ENCODE measurements at regions of chr6 and their contacts with region 1.

Region 1: GRCh38 chr6:31958741-31959739 is at the starts of genes NELFE and SKIC2:
- DNase-seq: peak; percentile 98 to 99
- ATAC-seq: peak; percentile 97 to 98 (median 97)
- H3K4me3 ChIP-seq: peak within 1 kb of the TSS; percentile 70
- H3K4me3 Mint-ChIP-seq: peak within 1 kb of the TSS; percentile 96
- H3K27ac ChIP-seq: peak within 1 kb of the TSS; percentile 88
- H3K27ac Mint-ChIP-seq: peak within 1 kb of the TSS; percentile 97 to 98
- H3K4me1 ChIP-seq: peaks cover 22% of the 10 kb centered on the region
- H3K4me1 Mint-ChIP-seq: peaks cover 31 to 43% of the 10 kb centered on the region in 2 donors
- H3K27me3 ChIP-seq: no peaks in the 10 kb centered on the region
- H3K27me3 Mint-ChIP-seq: no peaks in the 10 kb centered on the region
- CTCF ChIP-seq: no peak
- total RNA-seq, gene NELFE: 52.6 to 62.3 (median 56.3) TPM
- total RNA-seq, gene SKIC2: 119 to 184 (median 151) TPM

Region 2: DNA sequence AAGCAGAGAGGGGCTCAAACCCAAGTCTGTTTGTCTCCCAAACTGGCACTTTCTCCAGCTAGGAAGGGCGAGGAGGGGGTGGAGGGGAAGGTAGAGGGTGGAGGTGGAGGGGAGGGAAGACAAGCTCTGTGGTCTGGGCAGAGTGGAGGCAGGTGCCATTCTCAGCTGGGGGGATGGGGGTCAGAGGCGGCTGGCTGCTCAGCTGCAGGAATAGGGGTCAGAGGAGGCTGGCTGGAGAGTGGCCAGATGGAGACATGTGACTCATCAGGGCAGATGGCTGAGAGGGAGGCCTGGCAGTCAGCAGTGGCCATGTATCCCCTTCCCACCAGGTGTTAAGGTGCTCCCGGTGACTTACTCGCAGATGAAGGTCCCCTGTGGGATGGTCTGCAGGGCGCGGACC is 76.7 kb before region 1 on chr6:
- intact Hi-C with region 1: no loop called
- DNase-seq: no peak
- ATAC-seq: no peak
- H3K4me3 ChIP-seq: no peak overlapping the region
- H3K4me3 Mint-ChIP-seq: no peak overlapping the region
- H3K27ac ChIP-seq: no peak overlapping the region
- H3K27ac Mint-ChIP-seq: no peak overlapping the region
- H3K4me1 ChIP-seq: no peaks in the 10 kb centered on the region
- H3K4me1 Mint-ChIP-seq: peaks cover 0 to 10% of the 10 kb centered on the region in 2 donors
- H3K27me3 ChIP-seq: no peaks in the 10 kb centered on the region
- H3K27me3 Mint-ChIP-seq: no peaks in the 10 kb centered on the region
- CTCF ChIP-seq: no peak

Region 3: GRCh38 chr6:31897612-31898382 is 61.2 kb before region 1 on chr6 and contains the start of gene EHMT2:
- intact Hi-C with region 1: loop called (anchors 5 kb)
- DNase-seq: peak; percentile 82 to 91
- ATAC-seq: peak; percentile 59 to 83 (median 74)
- H3K4me3 ChIP-seq: peak within 1 kb of the TSS; percentile 76
- H3K4me3 Mint-ChIP-seq: peak within 1 kb of the TSS; percentile 97
- H3K27ac ChIP-seq: peak within 1 kb of the TSS; percentile 81
- H3K27ac Mint-ChIP-seq: peak within 1 kb of the TSS; percentile 95
- H3K4me1 ChIP-seq: peaks cover 52% of the 10 kb centered on the region
- H3K4me1 Mint-ChIP-seq: peaks cover 28 to 52% of the 10 kb centered on the region in 2 donors
- H3K27me3 ChIP-seq: no peaks in the 10 kb centered on the region
- H3K27me3 Mint-ChIP-seq: no peaks in the 10 kb centered on the region
- CTCF ChIP-seq: no peak
- total RNA-seq, gene EHMT2: 49.3 to 56.6 (median 55.8) TPM

Region 4: DNA sequence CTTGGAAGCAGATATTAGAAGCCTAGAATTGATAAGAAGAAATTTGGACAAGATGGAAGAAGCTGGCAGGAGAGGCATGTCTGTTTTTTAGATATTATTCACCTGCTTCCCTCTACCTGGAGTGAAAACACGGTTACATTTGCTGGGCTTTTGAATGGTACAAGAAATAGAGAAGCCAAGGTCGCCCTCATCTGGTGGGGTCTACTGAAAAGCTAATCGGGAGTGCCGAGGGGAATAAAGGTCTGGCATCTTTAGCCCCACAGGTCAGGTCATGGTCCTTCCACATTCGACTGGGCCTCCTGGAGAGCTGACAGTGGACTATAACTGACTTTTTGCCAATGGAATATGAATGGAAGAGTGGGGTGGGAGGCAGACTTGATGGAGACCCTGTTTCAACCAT is 36.1 kb before region 1 on chr6:
- intact Hi-C with region 1: no loop called
- DNase-seq: peak in 1 of 2 donors; percentile 52
- ATAC-seq: no peak
- H3K4me3 ChIP-seq: no peak overlapping the region
- H3K4me3 Mint-ChIP-seq: no peak overlapping the region
- H3K27ac ChIP-seq: no peak overlapping the region
- H3K27ac Mint-ChIP-seq: no peak overlapping the region
- H3K4me1 ChIP-seq: no peaks in the 10 kb centered on the region
- H3K4me1 Mint-ChIP-seq: no peaks in the 10 kb centered on the region
- H3K27me3 ChIP-seq: no peaks in the 10 kb centered on the region
- H3K27me3 Mint-ChIP-seq: peaks cover 3 to 7% of the 10 kb centered on the region in 2 donors
- CTCF ChIP-seq: no peak

Region 5: GRCh38 chr6:31933537-31933936 is 25.5 kb before region 1 on chr6:
- intact Hi-C with region 1: no loop called
- DNase-seq: no peak
- ATAC-seq: no peak
- H3K4me3 ChIP-seq: no peak overlapping the region
- H3K4me3 Mint-ChIP-seq: no peak overlapping the region
- H3K27ac ChIP-seq: no peak overlapping the region
- H3K27ac Mint-ChIP-seq: no peak overlapping the region
- H3K4me1 ChIP-seq: no peaks in the 10 kb centered on the region
- H3K4me1 Mint-ChIP-seq: no peaks in the 10 kb centered on the region
- H3K27me3 ChIP-seq: no peaks in the 10 kb centered on the region
- H3K27me3 Mint-ChIP-seq: no peaks in the 10 kb centered on the region
- CTCF ChIP-seq: no peak

Region 6: GRCh38 chr6:31945507-31946369 is 13.3 kb before region 1 on chr6 and contains the start of gene CFB:
- intact Hi-C with region 1: no loop called
- DNase-seq: no peak
- ATAC-seq: no peak
- H3K4me3 ChIP-seq: no peak within 1 kb of the TSS
- H3K4me3 Mint-ChIP-seq: no peak within 1 kb of the TSS
- H3K27ac ChIP-seq: no peak within 1 kb of the TSS
- H3K27ac Mint-ChIP-seq: peak within 1 kb of the TSS in 1 of 2 donors; percentile 44
- H3K4me1 ChIP-seq: no peaks in the 10 kb centered on the region
- H3K4me1 Mint-ChIP-seq: peaks cover 0 to 8% of the 10 kb centered on the region in 2 donors
- H3K27me3 ChIP-seq: peaks cover 3% of the 10 kb centered on the region
- H3K27me3 Mint-ChIP-seq: peaks cover 15 to 18% of the 10 kb centered on the region in 2 donors
- CTCF ChIP-seq: no peak
- total RNA-seq, gene CFB: 0.45 TPM in 1 of 3 donors, not detected in the others

Region 7: GRCh38 chr6:31971993-31972708 is 13.1 kb after region 1 on chr6 and contains the start of gene DXO:
- intact Hi-C with region 1: loop called (anchors 1 kb)
- DNase-seq: peak; percentile 99
- ATAC-seq: peak; percentile 89 to 98 (median 92)
- H3K4me3 ChIP-seq: peak within 1 kb of the TSS; percentile 83
- H3K4me3 Mint-ChIP-seq: peak within 1 kb of the TSS; percentile 93
- H3K27ac ChIP-seq: peak within 1 kb of the TSS; percentile 98
- H3K27ac Mint-ChIP-seq: peak within 1 kb of the TSS; percentile 93 to 97
- H3K4me1 ChIP-seq: peaks cover 23% of the 10 kb centered on the region
- H3K4me1 Mint-ChIP-seq: peaks cover 20 to 39% of the 10 kb centered on the region in 2 donors
- H3K27me3 ChIP-seq: no peaks in the 10 kb centered on the region
- H3K27me3 Mint-ChIP-seq: no peaks in the 10 kb centered on the region
- CTCF ChIP-seq: no peak
- total RNA-seq, gene DXO: 37.9 to 54.3 (median 49.0) TPM

Measured in natural killer cell (primary cell).